K562 (cell line): ENCODE measurements at regions of chr2 and their contacts with region 1.

Region 1: DNA sequence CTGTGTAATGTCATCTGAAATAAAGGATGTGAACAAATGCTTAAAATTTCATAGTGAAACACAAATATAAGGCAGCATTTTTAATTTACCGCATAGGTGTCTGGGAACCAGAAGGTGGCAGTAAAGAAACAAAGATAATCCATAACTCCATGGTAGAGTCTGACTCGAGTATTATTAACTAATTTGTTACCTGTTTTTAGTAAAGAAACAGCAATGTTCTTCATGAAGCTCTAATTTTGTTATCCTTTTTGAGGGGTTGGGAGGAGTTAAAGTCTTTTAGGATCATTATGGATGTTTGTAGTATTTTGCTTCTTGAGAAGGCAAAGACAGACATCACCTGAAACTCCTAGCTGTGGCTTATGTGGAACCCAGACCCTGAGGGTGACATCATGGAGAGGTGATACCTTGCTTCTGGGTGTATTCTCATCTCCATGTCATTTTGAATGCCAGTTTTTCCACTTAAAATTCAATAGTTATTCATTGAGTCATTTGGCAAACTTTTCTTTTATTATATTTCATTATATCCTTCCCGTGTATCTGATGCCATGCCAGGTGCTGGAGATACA is 286.2 kb upstream of the EPAS1 start:
- DNase-seq: peak in 2 of 4 experiments; percentile 34 to 49
- ATAC-seq: peak; percentile 77
- H3K4me3 ChIP-seq: no peak overlapping the region
- H3K27ac ChIP-seq: no peak overlapping the region
- H3K4me1 ChIP-seq: no peaks in the 10 kb centered on the region
- H3K27me3 ChIP-seq: peaks cover 14 to 18% of the 10 kb centered on the region in 2 experiments
- CTCF ChIP-seq: peak in 2 of 3 experiments; percentile 23 to 81; a peak in 4 of 6 replicates
- EP300 ChIP-seq: no peak
- POLR2A ChIP-seq: no peak
- RAD21 ChIP-seq: peak; percentile 81 to 88

Region 2: GRCh38 chr2:45797451-45798230 is 213.4 kb before region 1 on chr2:
- CTCF ChIA-PET with region 1: no interaction called
- POLR2A ChIA-PET with region 1: no interaction called
- in situ Hi-C with region 1: no loop called
- intact Hi-C with region 1: no loop called
- DNase-seq: no peak
- ATAC-seq: no peak
- H3K4me3 ChIP-seq: no peak overlapping the region
- H3K27ac ChIP-seq: no peak overlapping the region
- H3K4me1 ChIP-seq: no peaks in the 10 kb centered on the region; a peak in 1 of 5 replicates
- H3K27me3 ChIP-seq: peaks cover 4 to 24% of the 10 kb centered on the region in 2 experiments; a peak in 3 of 5 replicates
- CTCF ChIP-seq: no peak; a peak in 1 of 6 replicates
- EP300 ChIP-seq: no peak
- POLR2A ChIP-seq: no peak
- RAD21 ChIP-seq: no peak

Region 3: GRCh38 chr2:46377176-46377581 is 366.2 kb after region 1 on chr2:
- CTCF ChIA-PET with region 1: no interaction called
- POLR2A ChIA-PET with region 1: no interaction called
- in situ Hi-C with region 1: loop called (anchors 10 kb)
- intact Hi-C with region 1: no loop called
- DNase-seq: peak in 2 of 4 experiments; percentile 20 to 21
- ATAC-seq: peak; percentile 66
- H3K4me3 ChIP-seq: no peak overlapping the region
- H3K27ac ChIP-seq: no peak overlapping the region
- H3K4me1 ChIP-seq: peaks cover 0 to 9% of the 10 kb centered on the region in 2 experiments; a peak in 2 of 5 replicates
- H3K27me3 ChIP-seq: no peaks in the 10 kb centered on the region
- CTCF ChIP-seq: peak; percentile 27 to 46 (median 35); a peak in 2 of 6 replicates
- EP300 ChIP-seq: no peak
- POLR2A ChIP-seq: no peak
- RAD21 ChIP-seq: peak in 1 of 2 experiments; percentile 42; a peak in 2 of 4 replicates

Region 4: DNA sequence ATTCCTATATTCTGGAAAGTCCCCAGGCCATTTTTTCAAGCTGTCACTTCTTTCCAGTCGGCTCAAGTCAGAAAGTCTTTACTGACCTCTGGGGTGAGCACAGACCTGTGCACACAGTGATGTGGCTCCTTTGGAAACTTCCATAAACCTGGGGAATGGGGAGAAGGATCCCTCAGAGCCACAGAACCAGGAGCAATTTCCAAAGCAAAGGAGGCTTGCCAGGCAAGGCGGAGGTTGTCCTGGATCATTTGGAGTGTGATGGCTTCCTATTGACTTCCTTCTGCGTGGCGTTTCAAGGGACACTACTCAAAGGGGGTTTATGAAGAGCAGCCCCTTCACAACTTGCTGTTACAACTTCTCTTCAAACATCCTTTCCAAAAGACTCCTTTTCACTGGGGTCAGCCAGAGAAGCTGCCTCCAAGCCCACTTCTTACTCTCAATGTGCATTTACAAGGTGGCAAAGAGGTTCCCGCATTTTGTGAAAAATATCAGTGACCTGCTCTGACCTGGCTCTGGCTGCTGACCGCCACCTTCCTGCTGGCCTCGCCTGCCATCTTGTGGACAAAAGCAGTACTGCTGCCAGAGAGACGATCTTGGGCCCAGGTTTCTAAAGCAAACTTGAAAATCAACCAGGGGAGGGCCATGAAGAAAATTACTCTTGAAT is 450.1 kb after region 1 on chr2:
- CTCF ChIA-PET with region 1: interaction called, 48 read pairs
- POLR2A ChIA-PET with region 1: no interaction called
- in situ Hi-C with region 1: no loop called
- intact Hi-C with region 1: loop called (anchors 1 kb)
- DNase-seq: peak; percentile 76 to 84 (median 82)
- ATAC-seq: peak; percentile 83
- H3K4me3 ChIP-seq: no peak overlapping the region
- H3K27ac ChIP-seq: no peak overlapping the region; the same call in 2 of the 3 replicates
- H3K4me1 ChIP-seq: peaks cover 8 to 10% of the 10 kb centered on the region in 2 experiments; a peak in 4 of 5 replicates
- H3K27me3 ChIP-seq: no peaks in the 10 kb centered on the region
- CTCF ChIP-seq: peak; percentile 94 to 98 (median 97)
- EP300 ChIP-seq: no peak
- POLR2A ChIP-seq: no peak
- RAD21 ChIP-seq: peak; percentile 97 to 98